Mammary epithelial cell (primary cell): ENCODE measurements at regions of chr6 and their contacts with region 1.

Region 1: DNA sequence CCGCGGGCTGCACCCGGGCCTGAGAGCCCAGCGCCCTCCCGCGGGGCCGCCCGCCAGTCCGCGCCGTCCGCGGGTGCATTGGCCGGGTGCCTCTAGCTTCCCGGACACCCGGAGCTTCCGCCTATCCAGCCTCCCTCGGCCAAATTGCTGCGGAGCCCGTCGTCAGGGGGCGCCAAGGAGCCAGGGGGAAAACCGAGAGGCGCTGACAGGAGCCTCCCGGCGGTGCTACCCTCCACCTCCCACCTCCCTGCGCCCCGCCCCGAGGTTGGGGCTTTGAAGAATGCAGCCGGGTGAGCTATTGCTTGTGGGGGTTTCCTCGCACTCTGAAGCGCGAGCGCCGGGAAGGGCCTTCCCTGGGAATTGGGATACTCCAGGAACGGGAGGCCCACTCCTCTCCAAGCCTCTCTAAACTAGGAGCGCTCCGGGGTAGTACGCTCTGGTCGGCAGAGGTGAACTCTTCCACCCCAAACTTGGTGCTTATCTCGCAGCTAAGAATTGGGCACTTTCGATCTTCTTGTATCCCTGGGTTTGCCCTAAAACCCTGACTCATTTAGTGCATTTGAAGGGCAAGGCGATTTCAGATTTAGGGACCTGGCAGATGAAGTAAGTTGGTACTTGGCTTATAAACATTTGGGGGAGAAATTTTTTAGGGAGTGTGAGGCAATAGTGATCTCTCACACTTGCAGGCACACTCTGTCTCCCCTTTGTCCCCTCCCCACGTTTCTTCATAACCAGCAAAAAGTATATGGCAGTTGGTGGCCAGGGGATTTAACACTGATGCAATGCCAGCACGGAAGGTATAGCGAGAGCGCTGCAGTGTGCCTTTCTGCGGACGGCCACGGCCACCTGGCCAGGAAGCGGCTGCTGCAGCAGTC is 501 bp downstream of the BEND6 start:
- DNase-seq: peak; percentile 96
- H3K4me3 ChIP-seq: peak overlapping the region; percentile 50 to 87 (median 80)
- H3K27ac ChIP-seq: peak overlapping the region; percentile 50
- H3K4me1 ChIP-seq: peaks cover 45% of the 10 kb centered on the region
- H3K27me3 ChIP-seq: no peaks in the 10 kb centered on the region
- CTCF ChIP-seq: peak; percentile 59 to 94

Region 2: GRCh38 chr6:56708810-56709597 is 246.4 kb before region 1 on chr6:
- CTCF ChIA-PET with region 1: no interaction called
- dilution Hi-C with region 1: no loop called
- in situ Hi-C with region 1: no loop called
- intact Hi-C with region 1: loop called (anchors 2 kb)
- DNase-seq: peak; percentile 68
- H3K4me3 ChIP-seq: peak overlapping the region; percentile 8 to 41 (median 39)
- H3K27ac ChIP-seq: peak overlapping the region; percentile 75
- H3K4me1 ChIP-seq: peaks cover 14% of the 10 kb centered on the region
- H3K27me3 ChIP-seq: no peaks in the 10 kb centered on the region
- CTCF ChIP-seq: peak; percentile 52 to 59

Region 3: DNA sequence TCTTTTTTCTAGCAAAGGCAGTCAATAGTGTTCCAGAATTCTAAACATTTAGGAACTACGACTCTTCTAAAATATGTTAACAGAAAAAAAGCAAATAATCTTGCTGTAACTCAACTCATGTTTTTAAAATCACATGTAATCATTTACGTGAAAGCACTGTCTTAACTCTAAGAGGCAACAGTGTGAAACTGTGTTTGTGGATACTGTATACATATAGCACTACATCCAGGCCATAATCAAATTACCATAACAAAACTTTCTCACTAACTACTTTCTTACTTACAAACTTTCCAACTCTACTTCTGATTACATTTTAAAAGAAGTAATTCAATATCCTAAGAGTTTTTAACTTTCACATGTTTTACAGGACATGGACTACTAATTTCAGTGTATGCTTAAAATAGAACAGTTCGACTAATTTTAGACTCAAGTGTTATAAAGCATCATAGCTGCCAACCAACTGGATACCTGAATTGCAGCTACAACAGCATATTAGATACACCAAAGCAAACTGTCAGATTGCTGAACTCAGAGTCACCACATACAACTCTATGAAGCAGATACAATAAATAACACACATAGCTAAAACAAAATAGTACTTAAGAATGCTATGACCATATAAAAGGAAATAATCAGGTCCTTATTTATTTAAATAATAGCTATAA is 122.1 kb before region 1 on chr6:
- CTCF ChIA-PET with region 1: no interaction called
- dilution Hi-C with region 1: no loop called
- in situ Hi-C with region 1: no loop called
- intact Hi-C with region 1: no loop called
- DNase-seq: no peak
- H3K4me3 ChIP-seq: no peak overlapping the region
- H3K27ac ChIP-seq: no peak overlapping the region
- H3K4me1 ChIP-seq: no peaks in the 10 kb centered on the region
- H3K27me3 ChIP-seq: no peaks in the 10 kb centered on the region
- CTCF ChIP-seq: no peak

Region 4: GRCh38 chr6:56877922-56878321 is 77.5 kb before region 1 on chr6:
- CTCF ChIA-PET with region 1: no interaction called
- dilution Hi-C with region 1: no loop called
- in situ Hi-C with region 1: no loop called
- intact Hi-C with region 1: no loop called
- DNase-seq: no peak
- H3K4me3 ChIP-seq: no peak overlapping the region
- H3K27ac ChIP-seq: no peak overlapping the region
- H3K4me1 ChIP-seq: no peaks in the 10 kb centered on the region
- H3K27me3 ChIP-seq: no peaks in the 10 kb centered on the region
- CTCF ChIP-seq: no peak

Region 5: GRCh38 chr6:56902641-56903464 is 52.6 kb before region 1 on chr6:
- CTCF ChIA-PET with region 1: interaction called, 16 read pairs
- dilution Hi-C with region 1: no loop called
- in situ Hi-C with region 1: loop called in 1 of 2 experiments (anchors 10 kb)
- intact Hi-C with region 1: loop called (anchors 1 kb)
- DNase-seq: peak; percentile 31
- H3K4me3 ChIP-seq: no peak overlapping the region
- H3K27ac ChIP-seq: no peak overlapping the region
- H3K4me1 ChIP-seq: peaks cover 15% of the 10 kb centered on the region
- H3K27me3 ChIP-seq: no peaks in the 10 kb centered on the region
- CTCF ChIP-seq: peak; percentile 56 to 68

Region 6: DNA sequence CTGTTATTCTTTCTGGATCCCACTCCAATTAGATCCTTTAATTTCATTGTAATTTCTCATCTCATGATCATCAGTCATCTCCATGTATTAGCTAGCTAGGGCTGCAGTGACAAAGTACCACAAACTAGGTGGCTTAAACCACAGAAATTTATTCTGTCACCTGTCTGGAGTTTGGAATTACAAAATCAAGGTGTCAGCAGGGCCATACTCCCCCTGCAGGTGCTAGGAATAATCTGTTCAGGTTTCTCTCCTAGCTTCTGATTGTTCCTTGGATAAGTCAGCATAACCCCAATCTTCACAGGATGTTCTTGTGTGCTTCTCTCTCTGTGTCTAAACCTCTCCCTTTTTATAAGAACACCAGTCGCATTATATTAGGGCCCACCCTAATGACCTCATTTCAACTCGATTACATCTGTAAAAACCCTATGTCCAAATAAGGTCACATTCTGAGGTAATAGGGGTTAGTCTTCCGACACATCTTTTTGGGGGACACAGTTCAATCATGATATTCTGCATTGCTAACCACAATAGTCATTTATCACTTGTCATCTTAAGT is 40.0 kb after region 1 on chr6:
- CTCF ChIA-PET with region 1: interaction called, 9 read pairs
- dilution Hi-C with region 1: no loop called
- in situ Hi-C with region 1: no loop called
- intact Hi-C with region 1: loop called (anchors 1 kb)
- DNase-seq: peak; percentile 11
- H3K4me3 ChIP-seq: no peak overlapping the region
- H3K27ac ChIP-seq: no peak overlapping the region
- H3K4me1 ChIP-seq: peaks cover 8% of the 10 kb centered on the region
- H3K27me3 ChIP-seq: no peaks in the 10 kb centered on the region
- CTCF ChIP-seq: peak; percentile 13 to 46

Region 7: DNA sequence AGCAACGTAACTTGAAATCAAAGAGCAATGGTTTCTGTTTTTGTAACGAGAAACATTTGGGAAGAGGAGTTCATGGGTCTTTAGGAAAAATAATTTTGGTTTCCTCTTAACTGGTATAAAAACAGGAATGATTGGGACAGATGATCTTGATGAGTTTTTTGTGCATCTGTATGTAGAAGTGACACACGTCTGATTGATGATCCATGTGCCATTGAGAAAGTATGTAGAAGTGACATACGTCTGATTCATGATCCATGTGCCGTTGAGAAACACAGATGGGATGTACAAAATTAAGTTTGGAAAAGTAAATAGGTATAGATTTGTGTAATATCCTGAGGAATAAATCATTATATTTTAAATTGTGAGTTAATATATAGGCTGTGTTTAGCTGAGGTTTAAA is 93.2 kb after region 1 on chr6:
- CTCF ChIA-PET with region 1: no interaction called
- dilution Hi-C with region 1: no loop called
- in situ Hi-C with region 1: no loop called
- intact Hi-C with region 1: loop called (anchors 1 kb)
- DNase-seq: no peak
- H3K4me3 ChIP-seq: no peak overlapping the region
- H3K27ac ChIP-seq: no peak overlapping the region
- H3K4me1 ChIP-seq: peaks cover 9% of the 10 kb centered on the region
- H3K27me3 ChIP-seq: no peaks in the 10 kb centered on the region
- CTCF ChIP-seq: no peak